ENCODE measurements at regions of chr15 and their contacts with region 1.

Region 1: DNA sequence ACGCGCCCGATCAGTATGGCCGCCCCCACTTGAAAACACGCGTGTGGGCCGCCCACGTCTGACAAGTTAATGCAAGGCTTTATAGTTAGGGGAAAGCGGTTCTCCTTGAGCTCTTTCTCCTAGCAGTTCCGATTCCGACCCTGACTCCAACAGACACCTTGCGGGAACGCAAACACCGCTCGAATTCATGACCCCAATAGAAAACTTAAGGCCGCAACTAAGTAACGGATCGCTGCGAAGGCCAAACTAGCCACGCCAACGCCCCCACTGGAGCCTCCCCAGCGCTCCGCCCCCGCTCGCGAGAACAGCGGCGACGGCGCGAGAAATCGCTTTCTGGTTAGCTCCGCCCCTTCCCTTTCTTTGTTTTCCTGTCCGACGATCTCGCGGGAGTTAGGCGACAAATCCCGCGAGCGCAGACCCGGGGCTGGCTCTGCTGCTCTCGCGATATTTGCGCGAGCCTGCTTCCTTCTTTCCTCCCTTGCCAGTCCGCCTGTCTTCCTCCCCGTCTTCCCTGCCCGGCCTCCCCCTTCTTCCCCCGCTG is at the start of gene IREB2:
- DNase-seq: peak; percentile 96 to 97
- ATAC-seq: peak; percentile 92 to 94
- H3K4me3 ChIP-seq: peak within 1 kb of the TSS; percentile 81 to 100 (median 92)
- H3K27ac ChIP-seq: peak within 1 kb of the TSS; percentile 96 to 100 (median 98)
- H3K4me1 ChIP-seq: peaks cover 40 to 50% of the 10 kb centered on the region in 2 donors
- H3K27me3 ChIP-seq: no peaks in the 10 kb centered on the region
- CTCF ChIP-seq: peak in 1 of 5 experiments; percentile 24
- POLR2A ChIP-seq: peak; percentile 45 to 54
- total RNA-seq, gene IREB2: 18.9 to 37.4 (median 22.0) TPM

Region 2: DNA sequence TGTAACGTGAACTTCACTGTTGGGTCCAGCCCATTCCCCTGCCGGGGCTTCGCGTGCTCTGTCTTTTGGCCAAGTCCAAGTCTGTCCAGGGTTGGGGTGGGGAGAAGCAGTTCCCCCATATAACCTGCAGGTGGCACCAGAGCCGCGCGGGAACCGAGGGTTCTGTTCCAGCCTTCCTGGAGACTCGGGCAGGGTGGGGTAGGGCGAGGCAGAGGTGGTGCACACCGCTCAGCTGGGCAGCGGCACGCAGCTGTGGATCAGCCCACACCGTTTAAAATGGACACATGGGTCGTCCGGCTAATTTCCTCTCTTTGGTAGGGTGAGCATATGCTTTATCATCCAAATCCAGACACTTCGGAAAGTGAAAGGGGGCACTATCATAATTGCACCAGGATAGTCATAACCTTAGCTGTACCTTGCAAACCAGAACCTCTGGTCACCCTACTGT is 478.4 kb before region 1 on chr15:
- in situ Hi-C with region 1: loop called in 1 of 4 experiments (anchors 25 kb)
- intact Hi-C with region 1: no loop called
- DNase-seq: peak; percentile 49 to 71
- ATAC-seq: peak; percentile 89 to 98
- H3K4me3 ChIP-seq: peak overlapping the region; percentile 21 to 50 (median 30)
- H3K27ac ChIP-seq: no peak overlapping the region
- H3K4me1 ChIP-seq: peaks cover 0 to 9% of the 10 kb centered on the region in 2 donors
- H3K27me3 ChIP-seq: no peaks in the 10 kb centered on the region
- CTCF ChIP-seq: peak; percentile 91 to 99 (median 95)
- POLR2A ChIP-seq: no peak

Region 3: GRCh38 chr15:78149068-78149804 is 288.6 kb before region 1 on chr15 and contains the start of gene IDH3A:
- in situ Hi-C with region 1: loop called in 2 of 4 experiments (anchors 25 kb)
- intact Hi-C with region 1: loop called (anchors 10 kb)
- DNase-seq: peak; percentile 97 to 98
- ATAC-seq: peak; percentile 81 to 90
- H3K4me3 ChIP-seq: peak within 1 kb of the TSS; percentile 65 to 85 (median 73)
- H3K27ac ChIP-seq: peak within 1 kb of the TSS; percentile 86 to 96 (median 92)
- H3K4me1 ChIP-seq: peaks cover 47 to 53% of the 10 kb centered on the region in 2 donors
- H3K27me3 ChIP-seq: no peaks in the 10 kb centered on the region
- CTCF ChIP-seq: no peak
- POLR2A ChIP-seq: peak; percentile 96 to 97
- total RNA-seq, gene IDH3A: 133 to 202 (median 168) TPM

Region 4: DNA sequence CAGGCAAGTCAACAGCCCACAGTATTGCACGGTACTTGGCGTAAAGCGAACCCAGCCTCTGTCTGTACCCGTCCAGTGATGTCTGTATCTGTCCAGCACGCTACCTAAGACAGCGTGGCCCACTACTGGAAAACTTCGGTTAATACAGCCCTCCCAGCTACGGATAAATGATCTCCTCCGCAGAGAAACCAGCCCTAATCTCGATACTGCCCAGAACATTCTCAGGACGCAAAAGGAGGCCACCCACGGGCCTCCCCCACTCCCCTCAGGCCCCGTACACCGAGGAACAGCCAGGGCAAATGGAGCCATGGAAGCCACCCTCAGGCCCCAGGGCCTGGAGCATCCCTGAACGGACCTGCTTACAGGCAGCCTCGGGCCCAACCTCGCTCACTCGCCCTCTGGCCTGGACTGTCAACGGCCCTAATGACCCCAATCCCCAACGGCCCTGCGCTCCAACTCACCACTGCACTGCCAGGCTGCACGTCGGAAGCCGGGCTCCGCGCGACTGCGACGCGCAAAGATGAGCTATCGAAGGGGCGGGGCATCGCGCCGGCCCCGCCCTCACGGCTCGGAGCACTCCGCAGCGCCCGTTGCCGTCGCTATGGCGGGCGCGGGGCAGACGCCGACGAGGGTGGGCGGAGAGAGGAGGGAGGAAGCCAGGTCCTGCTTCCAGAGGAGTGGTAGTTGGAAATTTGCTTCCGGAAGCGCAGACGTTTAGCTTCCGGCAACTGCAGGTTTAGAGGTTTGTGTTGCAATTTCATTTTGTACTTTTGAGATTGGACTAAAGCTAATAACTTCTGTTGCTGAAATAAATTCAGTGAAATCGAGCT is 138.5 kb before region 1 on chr15 and contains the start of gene SKIC8:
- in situ Hi-C with region 1: loop called in 1 of 4 experiments (anchors 10 kb)
- intact Hi-C with region 1: loop called (anchors 1 kb)
- DNase-seq: peak; percentile 80 to 91
- ATAC-seq: peak; percentile 92 to 95
- H3K4me3 ChIP-seq: peak within 1 kb of the TSS; percentile 74 to 98 (median 92)
- H3K27ac ChIP-seq: peak within 1 kb of the TSS; percentile 84 to 88 (median 85)
- H3K4me1 ChIP-seq: peaks cover 16 to 19% of the 10 kb centered on the region in 2 donors
- H3K27me3 ChIP-seq: no peaks in the 10 kb centered on the region
- CTCF ChIP-seq: no peak
- POLR2A ChIP-seq: peak; percentile 78 to 85
- total RNA-seq, gene SKIC8: 36.9 to 48.6 (median 42.7) TPM

Region 5: DNA sequence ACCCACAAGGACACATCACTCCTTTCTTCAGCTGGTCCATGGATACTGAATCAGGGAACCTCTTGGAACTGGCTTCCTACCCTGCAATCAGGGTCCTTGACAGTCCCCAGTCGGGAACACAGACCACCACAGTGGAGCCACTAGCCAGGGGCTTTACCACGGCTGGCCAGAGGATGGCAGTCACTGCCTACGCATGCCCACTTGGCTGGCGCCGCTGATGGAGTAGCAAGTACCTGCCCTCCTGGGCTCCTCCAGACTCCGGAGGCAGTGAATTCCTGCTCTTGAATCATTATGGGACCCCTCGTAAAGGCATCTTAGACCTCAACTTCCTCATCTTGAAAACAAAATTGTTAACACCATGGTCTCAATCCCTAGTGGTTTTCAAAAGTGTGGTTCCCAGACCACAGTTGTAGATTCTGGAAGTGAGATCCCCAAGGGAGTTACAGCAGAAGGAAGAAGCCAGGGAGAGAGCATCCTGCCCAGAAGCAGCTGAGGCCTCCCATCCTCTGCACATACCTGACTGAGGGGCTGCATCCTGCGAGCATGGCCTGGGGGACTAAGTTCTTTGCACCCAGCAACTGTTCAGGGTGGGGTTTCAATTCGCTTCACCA is 129.3 kb before region 1 on chr15:
- in situ Hi-C with region 1: loop called in 1 of 4 experiments (anchors 10 kb)
- intact Hi-C with region 1: no loop called
- DNase-seq: peak; percentile 14 to 43
- ATAC-seq: peak in 1 of 2 donors; percentile 72
- H3K4me3 ChIP-seq: no peak overlapping the region
- H3K27ac ChIP-seq: no peak overlapping the region
- H3K4me1 ChIP-seq: peaks cover 5 to 8% of the 10 kb centered on the region in 2 donors
- H3K27me3 ChIP-seq: no peaks in the 10 kb centered on the region
- CTCF ChIP-seq: peak; percentile 56 to 79 (median 69)
- POLR2A ChIP-seq: no peak

Region 6: GRCh38 chr15:78506971-78507830 is 69.4 kb after region 1 on chr15 and contains the start of gene HYKK:
- in situ Hi-C with region 1: no loop called
- intact Hi-C with region 1: loop called (anchors 5 kb)
- DNase-seq: peak; percentile 90 to 92
- ATAC-seq: peak; percentile 99 to 100
- H3K4me3 ChIP-seq: peak within 1 kb of the TSS; percentile 78 to 88 (median 86)
- H3K27ac ChIP-seq: peak within 1 kb of the TSS; percentile 68 to 83 (median 80)
- H3K4me1 ChIP-seq: peaks cover 5 to 14% of the 10 kb centered on the region in 2 donors
- H3K27me3 ChIP-seq: no peaks in the 10 kb centered on the region
- CTCF ChIP-seq: peak in 3 of 5 experiments; percentile 15 to 41 (median 26)
- POLR2A ChIP-seq: peak in 1 of 2 donors; percentile 23
- total RNA-seq, gene HYKK: 0.87 to 6.6 (median 4.4) TPM

Region 7: DNA sequence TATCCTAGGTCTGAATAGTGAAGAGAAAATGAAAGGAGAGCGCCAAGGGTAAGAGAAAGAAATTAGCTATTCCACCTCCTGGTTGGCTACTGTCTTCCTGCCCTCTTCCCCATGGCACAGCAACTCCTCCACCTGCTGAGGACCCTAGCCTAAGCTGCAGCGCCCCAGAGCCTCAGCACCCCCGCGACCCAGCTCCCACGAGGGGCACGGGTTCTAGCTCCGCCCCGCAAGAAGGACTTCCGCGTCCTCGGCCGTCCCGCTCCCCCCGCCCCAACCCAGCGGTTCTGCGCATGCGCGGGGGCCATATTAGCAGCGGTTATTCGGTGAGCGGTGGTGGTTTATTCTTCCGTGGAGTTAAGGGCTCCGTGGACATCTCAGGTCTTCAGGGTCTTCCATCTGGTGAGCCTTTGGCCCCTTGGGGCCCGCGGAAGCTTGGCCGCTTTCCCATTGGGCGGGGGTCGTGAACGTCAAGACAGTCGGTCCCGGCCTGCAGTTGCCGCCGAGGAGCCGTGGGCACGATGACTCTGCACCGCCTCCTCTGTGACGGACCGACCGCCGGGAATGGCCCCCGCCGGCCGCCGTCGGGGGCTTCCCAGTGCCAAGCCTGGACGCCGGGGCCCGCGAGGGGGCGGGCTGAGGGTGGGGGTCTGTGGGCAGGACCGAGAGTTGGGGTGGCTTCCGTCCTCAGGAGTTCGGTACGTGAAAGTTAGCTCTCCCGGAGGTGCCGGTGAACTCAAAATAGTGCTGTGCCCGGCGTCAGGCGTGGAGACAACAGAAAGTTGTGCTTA is 102.5 kb after region 1 on chr15 and contains the start of gene PSMA4:
- in situ Hi-C with region 1: no loop called
- intact Hi-C with region 1: loop called (anchors 1 kb)
- DNase-seq: peak; percentile 79 to 90
- ATAC-seq: peak; percentile 93 to 95
- H3K4me3 ChIP-seq: peak within 1 kb of the TSS; percentile 76 to 90 (median 84)
- H3K27ac ChIP-seq: peak within 1 kb of the TSS; percentile 91 to 97 (median 94)
- H3K4me1 ChIP-seq: peaks cover 12 to 16% of the 10 kb centered on the region in 2 donors
- H3K27me3 ChIP-seq: no peaks in the 10 kb centered on the region
- CTCF ChIP-seq: peak in 4 of 5 experiments; percentile 13 to 64 (median 48)
- POLR2A ChIP-seq: peak; percentile 86 to 94
- total RNA-seq, gene PSMA4: 176 to 243 (median 212) TPM

Measured in gastrocnemius medialis (tissue), 4 donors.